Cardiac septum (tissue), 1 donor: ENCODE measurements at regions of chr5 and their contacts with region 1.

Region 1: DNA sequence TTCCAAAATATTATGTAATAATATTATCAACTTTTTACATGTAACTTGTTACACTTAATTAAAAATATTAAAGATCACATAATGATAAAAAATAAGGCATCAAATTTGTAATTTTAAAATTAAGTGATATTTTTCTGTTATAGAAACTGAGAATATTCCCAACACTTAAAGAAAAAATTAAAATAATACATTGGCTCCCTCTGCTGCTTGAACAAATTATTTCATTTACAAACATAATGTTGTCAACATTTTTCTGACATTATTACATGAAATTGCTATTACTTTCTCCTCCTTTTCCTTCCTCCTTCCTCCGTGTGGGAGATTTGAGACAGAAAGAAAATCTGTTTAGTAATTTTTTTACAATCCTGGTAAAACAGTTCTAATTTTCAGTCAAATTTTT is 42.3 kb downstream of the RNF180 start:
- DNase-seq: no peak

Region 2: GRCh38 chr5:64074533-64074932 is 133.4 kb before region 1 on chr5:
- intact Hi-C with region 1: loop called (anchors 5 kb)
- DNase-seq: no peak

Region 3: DNA sequence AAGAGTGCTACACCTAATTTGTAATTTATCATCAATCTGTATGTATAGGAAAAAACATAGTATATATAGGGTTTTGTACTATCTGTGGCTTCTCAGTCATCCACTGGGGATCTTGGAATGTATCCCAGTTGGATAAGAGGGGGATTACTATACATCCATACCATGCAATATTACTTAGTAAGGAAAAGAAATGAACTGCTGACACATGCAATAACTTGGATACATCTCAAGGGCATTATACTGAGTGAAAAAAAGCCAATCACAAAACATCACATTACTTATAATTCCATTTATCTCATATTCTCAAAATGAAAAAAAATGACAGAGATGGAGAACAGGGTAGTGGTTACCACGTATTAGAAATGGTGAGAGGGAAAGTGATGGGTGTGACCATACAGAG is 189.6 kb after region 1 on chr5:
- intact Hi-C with region 1: no loop called
- DNase-seq: no peak